ENCODE measurements at regions of chr2 and their contacts with region 1.

Region 1: DNA sequence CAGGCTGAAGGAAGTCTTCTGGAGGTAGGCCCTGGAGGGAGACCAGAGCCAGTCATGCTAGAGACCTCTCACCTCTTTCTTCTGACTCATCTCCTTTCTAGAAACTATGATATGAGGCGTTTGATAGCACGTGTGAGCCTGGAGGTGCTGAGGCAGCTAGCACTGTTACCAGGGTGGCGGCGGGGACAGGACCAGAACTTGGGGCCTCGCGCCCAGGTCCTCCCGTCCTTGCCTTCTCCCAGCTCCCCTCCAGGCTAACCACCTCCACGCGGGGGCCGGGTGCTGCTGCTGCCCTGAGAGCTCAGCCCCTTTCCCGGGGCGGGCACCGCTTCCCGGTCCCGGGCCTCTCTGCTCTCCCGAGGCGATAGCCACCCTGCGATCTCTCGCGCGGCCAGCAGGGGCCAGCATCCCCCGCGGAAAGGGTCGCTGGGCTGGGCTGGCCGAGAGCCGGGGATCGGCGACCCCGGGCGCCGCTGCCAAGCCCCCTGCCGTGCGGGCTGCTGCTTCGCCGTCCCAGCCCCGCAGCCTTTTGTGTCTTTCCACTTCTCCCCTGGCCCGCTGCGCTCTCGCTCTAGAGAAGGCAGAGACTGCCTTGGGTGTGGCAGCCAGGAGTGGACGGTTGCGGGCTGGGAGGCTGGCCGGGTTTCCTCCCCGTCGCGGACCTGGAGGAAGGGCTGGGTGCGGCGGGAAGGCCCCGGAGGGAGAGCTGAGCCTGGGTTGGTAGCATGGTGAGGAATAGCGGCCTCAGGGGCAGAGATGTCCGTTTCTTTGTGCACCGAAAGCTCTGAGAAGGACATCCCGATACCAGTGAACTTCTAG is 49.1 kb downstream of the TMEM17 start:
- DNase-seq: peak; percentile 84
- ATAC-seq: peak; percentile 95

Region 2: DNA sequence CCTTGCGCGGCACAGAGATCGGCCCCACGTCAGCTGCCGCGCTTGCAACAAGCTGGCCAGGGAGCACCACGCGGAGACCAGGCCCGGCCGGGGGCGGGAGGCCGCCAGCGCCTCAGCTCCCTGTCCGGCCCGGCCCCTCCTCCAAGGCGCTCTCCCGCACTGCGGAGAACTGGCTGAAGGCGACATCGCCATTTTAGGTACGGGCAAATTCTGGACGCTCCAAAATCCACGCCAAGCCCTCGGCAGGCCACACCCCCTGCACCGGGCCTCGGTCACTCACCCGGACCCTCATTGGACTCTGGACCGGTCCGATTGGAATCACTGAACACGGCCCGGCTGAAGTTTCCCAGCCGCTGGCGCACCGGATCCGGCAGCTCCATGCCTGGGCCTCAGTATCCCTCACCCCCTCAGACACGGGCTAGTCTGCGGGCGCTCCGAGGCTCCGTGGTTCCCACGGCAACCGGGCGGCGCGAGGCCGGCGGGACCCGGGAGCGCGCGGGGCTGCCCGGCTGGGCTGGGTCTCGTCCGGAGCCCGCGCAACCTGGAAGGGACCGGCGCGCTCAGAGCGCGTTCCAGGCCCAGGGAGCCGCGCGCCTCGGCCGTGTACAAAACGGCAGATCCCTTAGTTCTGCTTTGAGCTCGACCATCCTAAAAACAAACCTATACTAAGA is 49.0 kb after region 1 on chr2 and contains the start of gene TMEM17:
- intact Hi-C with region 1: no loop called
- DNase-seq: peak; percentile 95
- ATAC-seq: peak; percentile 98
- total RNA-seq, gene TMEM17: 1.7 TPM

Region 3: DNA sequence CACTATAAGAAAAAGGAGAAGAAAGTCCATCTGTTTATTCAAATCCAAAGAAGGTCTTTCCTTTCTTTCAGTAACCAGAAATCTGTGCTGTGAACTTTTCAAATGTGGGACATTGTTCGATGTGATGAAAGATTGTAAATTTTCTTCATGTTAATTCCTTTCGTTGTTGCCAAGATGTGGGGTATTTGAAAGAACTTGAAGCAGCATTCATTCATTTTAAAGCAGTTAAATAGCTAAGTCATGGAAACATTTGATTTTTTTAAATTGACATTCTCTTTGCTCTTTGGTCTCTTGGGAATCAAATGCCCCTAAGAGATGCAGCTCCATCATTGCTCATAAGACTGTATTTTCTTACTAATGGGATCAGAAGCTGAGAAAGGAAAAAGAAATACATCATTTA is 154.9 kb after region 1 on chr2:
- intact Hi-C with region 1: no loop called
- DNase-seq: no peak
- ATAC-seq: no peak

Region 4: GRCh38 chr2:62774555-62775366 is 317.8 kb after region 1 on chr2:
- intact Hi-C with region 1: loop called (anchors 2 kb)
- DNase-seq: no peak
- ATAC-seq: peak; percentile 83